ENCODE measurements at regions of chr1 and their contacts with region 1.

Region 1: DNA sequence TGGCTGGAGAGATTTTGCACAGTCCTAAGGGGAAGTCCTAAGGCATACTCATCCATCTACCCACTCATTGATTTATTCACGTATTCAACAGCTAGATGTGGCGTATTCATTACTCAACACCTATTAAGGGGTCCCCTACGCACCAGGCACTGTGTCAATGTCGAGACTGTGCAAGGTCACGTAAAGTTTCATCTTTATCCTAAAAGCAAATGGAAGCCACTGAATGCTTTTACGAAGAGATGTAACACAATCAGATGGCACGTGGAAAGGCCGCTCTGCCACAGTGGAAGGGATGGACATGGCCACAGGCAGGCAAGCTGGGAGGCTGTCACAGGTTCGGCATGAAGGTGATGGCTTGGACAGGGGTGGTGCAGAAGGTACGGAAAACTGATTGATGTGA is 66.3 kb upstream of the ZBTB18 start:
- DNase-seq: no peak
- ATAC-seq: no peak

Region 2: GRCh38 chr1:243375596-243375995 is 609.2 kb before region 1 on chr1:
- intact Hi-C with region 1: no loop called
- DNase-seq: no peak
- ATAC-seq: no peak

Region 3: GRCh38 chr1:243968413-243968812 is 16.4 kb before region 1 on chr1:
- intact Hi-C with region 1: loop called in 1 of 2 experiments (anchors 1 kb)
- DNase-seq: no peak
- ATAC-seq: no peak

Region 4: GRCh38 chr1:244322791-244323521 is 338.2 kb after region 1 on chr1:
- intact Hi-C with region 1: no loop called
- DNase-seq: no peak
- ATAC-seq: peak; percentile 86 to 90